ENCODE measurements at regions of chr1 and their contacts with region 1.

Region 1: DNA sequence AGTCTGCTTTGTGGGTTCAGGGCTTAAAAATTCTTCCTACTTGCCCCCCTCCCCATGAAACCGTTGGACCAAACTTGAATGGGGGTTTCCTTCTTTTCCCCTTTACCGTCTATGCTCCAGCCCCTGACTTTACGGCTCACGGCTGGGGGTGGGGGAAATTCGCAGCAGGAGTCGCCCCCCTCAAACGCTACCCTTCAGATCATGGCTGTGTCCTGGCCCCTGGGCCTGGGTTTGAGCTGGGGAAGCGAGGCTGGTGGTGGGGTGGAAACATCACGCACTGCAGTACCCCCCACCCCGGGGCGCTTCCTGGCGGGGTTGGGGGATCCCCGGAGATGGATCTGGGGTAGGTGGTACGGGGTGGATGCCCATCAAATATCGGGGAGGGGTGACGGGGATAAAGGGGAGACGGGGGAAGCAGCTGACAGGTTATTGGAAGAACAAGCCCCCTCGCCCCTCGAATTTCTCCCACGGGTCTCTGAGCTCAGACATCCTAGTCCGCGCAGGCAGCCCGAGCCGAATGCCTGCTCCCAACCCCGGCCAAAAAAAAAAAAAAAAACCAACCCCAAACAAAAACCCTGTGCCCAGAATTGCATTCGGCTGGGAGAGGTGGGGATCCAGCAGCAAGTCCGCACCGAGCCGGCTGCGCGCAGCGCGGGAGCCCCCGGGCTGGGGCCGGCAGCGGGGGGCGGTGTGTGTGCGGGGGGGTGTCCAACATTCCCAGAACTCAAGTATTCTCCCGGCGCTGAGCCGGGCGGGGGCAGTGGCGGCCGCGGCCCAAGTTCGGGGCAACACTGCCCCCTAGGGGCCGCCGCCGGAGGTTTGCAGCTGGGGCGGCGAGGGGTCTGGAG is 59.0 kb upstream of the ACOT11 start:
- DNase-seq: peak; percentile 81 to 82
- ATAC-seq: peak; percentile 58 to 84 (median 70)
- H3K4me3 ChIP-seq: peak overlapping the region; percentile 58
- H3K4me3 Mint-ChIP-seq: peak overlapping the region; percentile 89
- H3K27ac ChIP-seq: peak overlapping the region; percentile 70
- H3K27ac Mint-ChIP-seq: peak overlapping the region; percentile 81 to 92
- H3K4me1 ChIP-seq: peaks cover 49% of the 10 kb centered on the region
- H3K4me1 Mint-ChIP-seq: peaks cover 42 to 49% of the 10 kb centered on the region in 2 donors
- H3K27me3 ChIP-seq: peaks cover 7% of the 10 kb centered on the region
- H3K27me3 Mint-ChIP-seq: peaks cover 6 to 17% of the 10 kb centered on the region in 2 donors
- CTCF ChIP-seq: peak; percentile 98

Region 2: GRCh38 chr1:52771384-52771783 is 1717.6 kb before region 1 on chr1:
- intact Hi-C with region 1: no loop called
- DNase-seq: no peak
- ATAC-seq: no peak
- H3K4me3 ChIP-seq: no peak overlapping the region
- H3K4me3 Mint-ChIP-seq: no peak overlapping the region
- H3K27ac ChIP-seq: no peak overlapping the region
- H3K27ac Mint-ChIP-seq: no peak overlapping the region
- H3K4me1 ChIP-seq: no peaks in the 10 kb centered on the region
- H3K4me1 Mint-ChIP-seq: peaks cover 0 to 15% of the 10 kb centered on the region in 2 donors
- H3K27me3 ChIP-seq: no peaks in the 10 kb centered on the region
- H3K27me3 Mint-ChIP-seq: no peaks in the 10 kb centered on the region
- CTCF ChIP-seq: no peak

Region 3: GRCh38 chr1:54052934-54053744 is 435.9 kb before region 1 on chr1 and contains the starts of genes TCEANC2 and TMEM59:
- intact Hi-C with region 1: loop called (anchors 2 kb)
- DNase-seq: peak; percentile 93 to 99
- ATAC-seq: peak; percentile 88 to 96 (median 90)
- H3K4me3 ChIP-seq: peak within 1 kb of the TSS; percentile 88
- H3K4me3 Mint-ChIP-seq: no peak within 1 kb of the TSS
- H3K27ac ChIP-seq: peak within 1 kb of the TSS; percentile 84
- H3K27ac Mint-ChIP-seq: no peak within 1 kb of the TSS
- H3K4me1 ChIP-seq: peaks cover 33% of the 10 kb centered on the region
- H3K4me1 Mint-ChIP-seq: peaks cover 23 to 24% of the 10 kb centered on the region in 2 donors
- H3K27me3 ChIP-seq: no peaks in the 10 kb centered on the region
- H3K27me3 Mint-ChIP-seq: no peaks in the 10 kb centered on the region
- CTCF ChIP-seq: no peak
- total RNA-seq, gene TCEANC2: 5.1 to 9.5 (median 7.3) TPM
- total RNA-seq, gene TMEM59: 187 to 202 (median 199) TPM

Region 4: DNA sequence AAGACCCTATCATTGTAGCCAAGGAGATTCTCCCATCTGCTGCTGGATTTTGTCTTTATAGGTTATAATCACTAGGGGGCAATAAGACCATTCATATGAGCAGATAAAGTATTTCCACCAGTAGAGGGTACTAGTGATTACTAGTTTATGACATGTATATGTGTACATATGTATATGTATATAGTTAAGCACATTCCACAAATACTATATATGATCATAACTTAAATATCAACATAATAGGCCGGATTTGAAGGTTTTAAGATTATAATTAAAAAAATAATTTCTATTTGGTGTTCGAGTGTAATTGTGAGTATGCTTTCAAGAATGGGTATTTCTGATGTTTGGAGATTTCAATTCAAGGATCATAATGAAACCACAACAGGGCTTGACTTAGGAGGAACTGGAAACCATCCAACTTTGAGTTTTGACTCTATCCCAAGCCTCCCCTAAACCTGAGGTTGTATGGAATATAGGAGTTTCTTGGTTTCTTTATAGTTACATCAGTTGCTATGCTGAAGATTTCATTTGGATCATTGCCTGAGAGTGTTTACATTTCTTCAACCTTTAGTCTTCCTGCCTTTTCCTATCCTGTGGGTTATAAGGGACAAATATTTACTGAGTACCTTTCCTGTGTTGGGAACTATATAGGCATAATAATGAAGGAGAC is 418.7 kb before region 1 on chr1:
- intact Hi-C with region 1: loop called (anchors 1 kb)
- DNase-seq: peak in 1 of 2 donors; percentile 73
- ATAC-seq: peak; percentile 91 to 100 (median 98)
- H3K4me3 ChIP-seq: no peak overlapping the region
- H3K4me3 Mint-ChIP-seq: no peak overlapping the region
- H3K27ac ChIP-seq: no peak overlapping the region
- H3K27ac Mint-ChIP-seq: no peak overlapping the region
- H3K4me1 ChIP-seq: no peaks in the 10 kb centered on the region
- H3K4me1 Mint-ChIP-seq: no peaks in the 10 kb centered on the region
- H3K27me3 ChIP-seq: no peaks in the 10 kb centered on the region
- H3K27me3 Mint-ChIP-seq: no peaks in the 10 kb centered on the region
- CTCF ChIP-seq: peak; percentile 98

Region 5: GRCh38 chr1:54121482-54122134 is 367.4 kb before region 1 on chr1:
- intact Hi-C with region 1: loop called (anchors 1 kb)
- DNase-seq: peak; percentile 49 to 82
- ATAC-seq: peak; percentile 69 to 93 (median 91)
- H3K4me3 ChIP-seq: no peak overlapping the region
- H3K4me3 Mint-ChIP-seq: no peak overlapping the region
- H3K27ac ChIP-seq: no peak overlapping the region
- H3K27ac Mint-ChIP-seq: peak overlapping the region in 1 of 2 donors; percentile 31
- H3K4me1 ChIP-seq: peaks cover 9% of the 10 kb centered on the region
- H3K4me1 Mint-ChIP-seq: peaks cover 6 to 7% of the 10 kb centered on the region in 2 donors
- H3K27me3 ChIP-seq: no peaks in the 10 kb centered on the region
- H3K27me3 Mint-ChIP-seq: peaks cover 0 to 4% of the 10 kb centered on the region in 2 donors
- CTCF ChIP-seq: peak; percentile 37

Region 6: DNA sequence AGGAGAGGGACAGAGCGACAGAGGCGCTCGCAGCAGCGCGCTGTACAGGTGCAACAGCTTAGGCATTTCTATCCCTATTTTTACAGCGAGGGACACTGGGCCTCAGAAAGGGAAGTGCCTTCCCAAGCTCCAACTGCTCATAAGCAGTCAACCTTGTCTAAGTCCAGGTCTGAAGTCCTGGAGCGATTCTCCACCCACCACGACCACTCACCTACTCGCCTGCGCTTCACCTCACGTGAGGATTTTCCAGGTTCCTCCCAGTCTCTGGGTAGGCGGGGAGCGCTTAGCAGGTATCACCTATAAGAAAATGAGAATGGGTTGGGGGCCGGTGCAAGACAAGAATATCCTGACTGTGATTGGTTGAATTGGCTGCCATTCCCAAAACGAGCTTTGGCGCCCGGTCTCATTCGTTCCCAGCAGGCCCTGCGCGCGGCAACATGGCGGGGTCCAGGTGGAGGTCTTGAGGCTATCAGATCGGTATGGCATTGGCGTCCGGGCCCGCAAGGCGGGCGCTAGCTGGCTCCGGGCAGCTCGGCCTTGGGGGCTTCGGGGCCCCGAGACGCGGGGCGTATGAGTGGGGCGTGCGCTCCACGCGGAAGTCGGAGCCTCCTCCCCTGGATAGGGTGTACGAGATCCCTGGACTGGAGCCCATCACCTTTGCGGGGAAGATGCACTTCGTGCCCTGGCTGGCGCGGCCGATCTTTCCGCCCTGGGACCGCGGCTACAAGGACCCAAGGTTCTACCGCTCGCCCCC is 289.1 kb before region 1 on chr1 and contains the starts of genes CYB5RL and MRPL37:
- intact Hi-C with region 1: loop called (anchors 10 kb)
- DNase-seq: peak; percentile 78 to 95
- ATAC-seq: peak; percentile 96 to 97 (median 96)
- H3K4me3 ChIP-seq: peak within 1 kb of the TSS; percentile 83
- H3K4me3 Mint-ChIP-seq: peak within 1 kb of the TSS; percentile 92
- H3K27ac ChIP-seq: peak within 1 kb of the TSS; percentile 50
- H3K27ac Mint-ChIP-seq: peak within 1 kb of the TSS; percentile 84 to 90
- H3K4me1 ChIP-seq: peaks cover 13% of the 10 kb centered on the region
- H3K4me1 Mint-ChIP-seq: peaks cover 34 to 36% of the 10 kb centered on the region in 2 donors
- H3K27me3 ChIP-seq: no peaks in the 10 kb centered on the region
- H3K27me3 Mint-ChIP-seq: no peaks in the 10 kb centered on the region
- CTCF ChIP-seq: no peak
- total RNA-seq, gene CYB5RL: 5.6 to 6.7 (median 6.2) TPM
- total RNA-seq, gene MRPL37: 23.0 to 31.9 (median 28.8) TPM

Region 7: DNA sequence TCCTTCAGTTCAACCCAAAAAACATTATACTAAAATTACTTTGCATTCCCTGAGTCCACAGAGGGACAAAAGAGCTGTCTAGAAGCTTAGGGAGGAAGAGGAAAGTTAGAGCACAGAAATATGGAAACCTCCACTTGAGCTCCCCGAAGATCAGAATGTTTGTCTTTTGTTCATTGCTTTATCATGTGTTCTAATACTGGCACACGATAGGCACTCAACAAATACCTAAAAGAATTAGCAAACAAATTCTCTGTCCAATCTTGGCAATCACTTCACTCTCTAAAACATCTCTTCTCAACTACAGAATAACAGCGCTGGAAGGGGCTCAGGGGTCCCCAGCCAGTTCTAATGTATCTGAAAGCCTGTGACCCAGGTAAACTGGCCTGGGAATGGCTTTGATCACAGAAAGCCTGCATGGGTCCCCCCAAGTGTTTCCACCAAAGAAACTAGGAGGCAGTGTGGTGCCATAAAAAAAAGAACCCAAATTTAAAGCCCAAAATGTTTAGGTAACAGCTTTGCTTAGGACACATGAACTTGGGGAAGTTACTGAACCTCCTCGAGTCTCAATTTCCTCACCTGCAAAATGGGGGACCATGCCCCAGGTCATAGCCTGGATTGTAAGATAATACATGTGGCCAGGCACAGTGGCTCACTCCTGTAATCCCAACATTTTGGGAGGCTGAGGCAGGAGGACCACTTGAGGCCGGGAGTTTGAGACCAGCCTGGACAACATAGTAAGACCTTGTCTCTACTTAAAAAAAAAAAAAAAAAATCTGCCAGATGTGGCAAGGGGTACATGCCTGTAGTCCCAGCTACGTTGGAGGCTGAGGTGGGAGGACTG is 128.6 kb before region 1 on chr1:
- intact Hi-C with region 1: loop called (anchors 1 kb)
- DNase-seq: peak in 1 of 2 donors; percentile 38
- ATAC-seq: no peak
- H3K4me3 ChIP-seq: no peak overlapping the region
- H3K4me3 Mint-ChIP-seq: peak overlapping the region; percentile 42
- H3K27ac ChIP-seq: no peak overlapping the region
- H3K27ac Mint-ChIP-seq: peak overlapping the region; percentile 66 to 71
- H3K4me1 ChIP-seq: peaks cover 51% of the 10 kb centered on the region
- H3K4me1 Mint-ChIP-seq: peaks cover 99 to 100% of the 10 kb centered on the region in 2 donors
- H3K27me3 ChIP-seq: no peaks in the 10 kb centered on the region
- H3K27me3 Mint-ChIP-seq: no peaks in the 10 kb centered on the region
- CTCF ChIP-seq: no peak

Region 8: GRCh38 chr1:54519709-54520108 is 30.7 kb after region 1 on chr1:
- intact Hi-C with region 1: no loop called
- DNase-seq: no peak
- ATAC-seq: peak in 1 of 3 donors; percentile 34
- H3K4me3 ChIP-seq: no peak overlapping the region
- H3K4me3 Mint-ChIP-seq: no peak overlapping the region
- H3K27ac ChIP-seq: no peak overlapping the region
- H3K27ac Mint-ChIP-seq: no peak overlapping the region
- H3K4me1 ChIP-seq: no peaks in the 10 kb centered on the region
- H3K4me1 Mint-ChIP-seq: no peaks in the 10 kb centered on the region
- H3K27me3 ChIP-seq: no peaks in the 10 kb centered on the region
- H3K27me3 Mint-ChIP-seq: peaks cover 0 to 2% of the 10 kb centered on the region in 2 donors
- CTCF ChIP-seq: no peak

Region 9: GRCh38 chr1:54571803-54572541 is 83.0 kb after region 1 on chr1:
- intact Hi-C with region 1: no loop called
- DNase-seq: no peak
- ATAC-seq: no peak
- H3K4me3 ChIP-seq: no peak overlapping the region
- H3K4me3 Mint-ChIP-seq: no peak overlapping the region
- H3K27ac ChIP-seq: no peak overlapping the region
- H3K27ac Mint-ChIP-seq: peak overlapping the region in 1 of 2 donors; percentile 25
- H3K4me1 ChIP-seq: peaks cover 5% of the 10 kb centered on the region
- H3K4me1 Mint-ChIP-seq: peaks cover 4 to 10% of the 10 kb centered on the region in 2 donors
- H3K27me3 ChIP-seq: no peaks in the 10 kb centered on the region
- H3K27me3 Mint-ChIP-seq: peaks cover 0 to 3% of the 10 kb centered on the region in 2 donors
- CTCF ChIP-seq: no peak

Region 10: DNA sequence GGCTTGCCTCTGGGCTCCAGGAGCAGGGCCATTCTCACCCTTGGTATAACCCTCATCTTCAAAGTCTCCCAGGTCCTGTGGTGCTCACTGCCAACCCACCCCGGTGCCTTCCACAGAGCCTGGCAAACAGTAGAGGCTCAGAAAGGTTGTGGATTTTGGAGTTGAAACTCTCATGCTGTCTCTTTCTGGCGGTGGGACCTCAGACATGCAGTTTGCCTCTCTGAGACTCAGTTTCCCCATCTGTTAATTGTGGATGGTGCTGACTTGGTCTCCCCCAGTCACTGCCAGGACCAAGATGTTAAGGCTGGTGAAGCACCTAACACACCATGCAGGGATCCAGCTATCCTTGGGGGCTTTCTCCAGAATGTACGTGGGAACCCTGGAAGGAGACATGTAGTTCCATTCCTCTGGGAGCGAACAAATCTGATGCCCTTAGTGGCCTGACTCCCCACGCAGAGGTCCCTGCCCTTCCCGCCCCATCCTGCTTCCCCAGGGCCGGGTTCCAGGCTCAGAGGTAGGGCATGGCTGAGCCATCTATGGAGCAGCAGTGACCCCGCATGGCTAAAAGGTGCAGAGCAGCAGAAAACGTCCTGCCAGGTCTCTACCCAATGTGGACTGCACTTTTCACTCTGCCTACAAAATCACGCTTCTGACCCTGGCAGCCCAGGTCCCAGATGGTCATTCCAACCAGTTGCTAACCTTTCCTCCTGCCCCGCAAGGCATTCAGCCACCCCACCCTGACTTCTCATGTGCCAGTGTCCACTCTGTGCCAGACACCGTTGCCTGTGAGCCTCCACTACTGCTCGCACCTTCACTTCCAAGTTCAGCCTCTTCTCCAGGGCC is 321.3 kb after region 1 on chr1:
- intact Hi-C with region 1: loop called (anchors 5 kb)
- DNase-seq: peak; percentile 68 to 79
- ATAC-seq: peak; percentile 37 to 46 (median 46)
- H3K4me3 ChIP-seq: no peak overlapping the region
- H3K4me3 Mint-ChIP-seq: peak overlapping the region; percentile 40
- H3K27ac ChIP-seq: no peak overlapping the region
- H3K27ac Mint-ChIP-seq: peak overlapping the region; percentile 94 to 95
- H3K4me1 ChIP-seq: peaks cover 76% of the 10 kb centered on the region
- H3K4me1 Mint-ChIP-seq: peaks cover 55 to 64% of the 10 kb centered on the region in 2 donors
- H3K27me3 ChIP-seq: no peaks in the 10 kb centered on the region
- H3K27me3 Mint-ChIP-seq: no peaks in the 10 kb centered on the region
- CTCF ChIP-seq: peak; percentile 87

Region 11: GRCh38 chr1:55310505-55310971 is 821.5 kb after region 1 on chr1:
- intact Hi-C with region 1: no loop called
- DNase-seq: no peak
- ATAC-seq: no peak
- H3K4me3 ChIP-seq: no peak overlapping the region
- H3K4me3 Mint-ChIP-seq: no peak overlapping the region
- H3K27ac ChIP-seq: no peak overlapping the region
- H3K27ac Mint-ChIP-seq: no peak overlapping the region
- H3K4me1 ChIP-seq: no peaks in the 10 kb centered on the region
- H3K4me1 Mint-ChIP-seq: peaks cover 0 to 2% of the 10 kb centered on the region in 2 donors
- H3K27me3 ChIP-seq: no peaks in the 10 kb centered on the region
- H3K27me3 Mint-ChIP-seq: peaks cover 5 to 21% of the 10 kb centered on the region in 2 donors
- CTCF ChIP-seq: no peak

Measured in natural killer cell (primary cell).